HepG2 (cell line): ENCODE measurements at regions of chr10 and their contacts with region 1.

Region 1: DNA sequence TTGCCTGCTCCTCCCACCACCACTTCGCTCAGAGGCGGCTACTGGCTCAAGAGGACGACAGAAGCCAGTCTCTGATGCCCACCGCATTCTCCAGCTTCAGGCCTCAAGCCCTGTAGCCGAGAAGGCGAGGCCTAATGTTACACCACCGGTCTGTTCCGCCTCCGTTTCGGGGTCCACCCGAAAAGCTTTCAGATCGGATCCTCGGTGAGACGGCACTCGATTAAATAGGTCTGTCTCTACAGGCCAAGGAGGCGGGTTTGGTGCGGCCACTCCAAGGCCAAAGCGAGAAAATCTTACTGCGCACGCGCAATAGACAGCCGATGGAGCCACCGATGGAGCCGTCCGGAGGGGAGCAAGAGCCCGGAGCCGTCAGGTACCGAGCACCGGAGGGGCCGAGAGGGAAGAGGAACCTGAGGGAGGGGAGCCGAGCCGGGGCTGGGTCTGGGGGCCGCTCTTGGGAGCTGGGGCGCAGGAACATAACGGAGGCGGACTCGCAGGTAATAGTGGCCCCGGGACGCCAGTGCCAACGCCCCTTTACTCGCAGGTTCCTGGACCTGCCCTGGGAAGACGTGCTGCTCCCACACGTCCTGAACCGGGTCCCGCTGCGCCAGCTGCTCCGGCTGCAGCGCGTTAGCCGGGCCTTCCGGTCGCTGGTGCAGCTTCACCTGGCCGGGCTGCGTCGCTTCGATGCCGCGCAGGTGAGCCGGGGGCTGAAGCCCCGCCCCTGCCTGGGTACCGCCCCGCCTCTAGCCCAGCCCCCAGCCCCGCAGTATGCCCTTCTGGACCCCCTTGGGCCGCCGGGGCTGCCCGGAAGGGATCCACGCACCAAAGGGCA is at the start of gene FBXL15:
- DNase-seq: peak; percentile 95
- ATAC-seq: peak; percentile 58
- H3K4me3 ChIP-seq: peak within 1 kb of the TSS; percentile 79 to 97 (median 84)
- H3K27ac ChIP-seq: peak within 1 kb of the TSS; percentile 87
- H3K4me1 ChIP-seq: peaks cover 35% of the 10 kb centered on the region
- H3K27me3 ChIP-seq: peaks cover 1 to 5% of the 10 kb centered on the region in 2 experiments; a peak in 2 of 5 replicates
- CTCF ChIP-seq: no peak
- EP300 ChIP-seq: 0 out of 4 replicates have a peak, but pooled peaks have one; percentile 24 to 30
- POLR2A ChIP-seq: peak in 1 of 2 experiments; percentile 52; a peak in 1 of 4 replicates
- RAD21 ChIP-seq: no peak
- total RNA-seq, gene FBXL15: 8.3 and 8.6 TPM in 2 replicates

Region 2: DNA sequence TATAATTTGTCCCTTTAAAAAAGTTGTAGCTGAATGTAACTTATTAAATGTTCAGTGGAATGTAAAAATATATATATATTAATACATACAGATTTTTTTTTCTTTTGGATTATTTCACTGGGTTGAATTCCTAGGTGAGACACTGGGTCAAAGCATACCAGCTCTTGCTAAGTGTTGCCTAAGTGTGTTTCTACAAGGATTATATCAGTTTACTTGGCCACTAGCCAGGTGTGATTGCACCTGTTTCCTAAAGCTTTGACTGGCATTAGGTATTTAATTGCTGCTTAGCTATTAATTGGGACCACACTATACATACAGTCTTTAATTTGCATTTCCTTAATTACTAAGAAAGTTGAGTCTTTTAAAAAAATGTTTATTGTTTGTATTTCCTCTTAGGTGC is 200.4 kb before region 1 on chr10:
- CTCF ChIA-PET with region 1: no interaction called
- POLR2A ChIA-PET with region 1: no interaction called
- in situ Hi-C with region 1: no loop called
- intact Hi-C with region 1: no loop called
- DNase-seq: no peak
- ATAC-seq: no peak
- H3K4me3 ChIP-seq: no peak overlapping the region
- H3K27ac ChIP-seq: no peak overlapping the region
- H3K4me1 ChIP-seq: peaks cover 4% of the 10 kb centered on the region
- H3K27me3 ChIP-seq: 0 out of 5 replicates have a peak, but pooled peaks cover 0 to 2% of the 10 kb centered on the region in 2 experiments
- CTCF ChIP-seq: no peak
- EP300 ChIP-seq: no peak
- POLR2A ChIP-seq: no peak
- RAD21 ChIP-seq: no peak

Region 3: DNA sequence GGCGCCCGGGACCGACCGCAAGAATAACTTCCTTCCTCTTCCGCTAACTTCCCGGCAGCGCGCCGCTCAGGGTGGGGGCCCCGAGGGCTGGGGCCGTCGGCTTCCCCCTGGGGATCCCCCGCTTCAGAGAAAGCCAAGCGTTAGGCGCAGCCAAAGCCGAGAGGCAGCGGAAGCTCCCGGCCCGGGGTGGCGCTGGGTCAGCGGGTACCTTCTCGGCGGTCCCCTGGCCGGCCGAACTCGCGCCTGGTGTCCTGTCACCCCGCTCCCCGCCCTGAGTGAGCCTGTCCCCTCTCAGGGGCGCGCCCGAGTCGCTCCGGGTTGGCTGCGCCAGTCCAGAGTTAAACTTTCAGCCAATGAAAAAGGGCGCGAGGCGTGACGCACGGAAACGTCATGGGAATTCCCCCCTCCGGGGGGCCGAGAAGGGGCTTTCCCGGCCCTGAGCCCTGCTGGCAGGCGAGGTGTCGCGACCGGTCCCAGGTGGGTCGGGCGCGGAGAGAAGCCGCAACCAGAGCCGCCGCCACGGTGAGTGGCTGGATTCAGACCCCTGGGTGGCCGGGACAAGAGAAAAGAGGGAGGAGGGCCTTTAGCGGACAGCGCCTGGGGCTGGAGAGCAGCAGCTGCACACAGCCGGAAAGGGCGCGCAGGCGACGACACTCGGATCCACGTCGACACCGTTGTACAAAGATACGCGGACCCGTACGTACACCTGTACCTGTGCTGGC is 26.8 kb before region 1 on chr10:
- CTCF ChIA-PET with region 1: interaction called, 5 read pairs
- POLR2A ChIA-PET with region 1: interaction called, 12 read pairs
- in situ Hi-C with region 1: no loop called
- intact Hi-C with region 1: loop called (anchors 2 kb)
- DNase-seq: peak; percentile 85
- ATAC-seq: peak; percentile 90
- H3K4me3 ChIP-seq: peak overlapping the region; percentile 69 to 82 (median 79)
- H3K27ac ChIP-seq: peak overlapping the region; percentile 66
- H3K4me1 ChIP-seq: peaks cover 44% of the 10 kb centered on the region
- H3K27me3 ChIP-seq: peaks cover 0 to 11% of the 10 kb centered on the region in 2 experiments; a peak in 2 of 5 replicates
- CTCF ChIP-seq: peak; percentile 91
- EP300 ChIP-seq: no peak
- POLR2A ChIP-seq: peak in 1 of 2 experiments; percentile 51; a peak in 2 of 4 replicates
- RAD21 ChIP-seq: peak; percentile 93

Region 4: DNA sequence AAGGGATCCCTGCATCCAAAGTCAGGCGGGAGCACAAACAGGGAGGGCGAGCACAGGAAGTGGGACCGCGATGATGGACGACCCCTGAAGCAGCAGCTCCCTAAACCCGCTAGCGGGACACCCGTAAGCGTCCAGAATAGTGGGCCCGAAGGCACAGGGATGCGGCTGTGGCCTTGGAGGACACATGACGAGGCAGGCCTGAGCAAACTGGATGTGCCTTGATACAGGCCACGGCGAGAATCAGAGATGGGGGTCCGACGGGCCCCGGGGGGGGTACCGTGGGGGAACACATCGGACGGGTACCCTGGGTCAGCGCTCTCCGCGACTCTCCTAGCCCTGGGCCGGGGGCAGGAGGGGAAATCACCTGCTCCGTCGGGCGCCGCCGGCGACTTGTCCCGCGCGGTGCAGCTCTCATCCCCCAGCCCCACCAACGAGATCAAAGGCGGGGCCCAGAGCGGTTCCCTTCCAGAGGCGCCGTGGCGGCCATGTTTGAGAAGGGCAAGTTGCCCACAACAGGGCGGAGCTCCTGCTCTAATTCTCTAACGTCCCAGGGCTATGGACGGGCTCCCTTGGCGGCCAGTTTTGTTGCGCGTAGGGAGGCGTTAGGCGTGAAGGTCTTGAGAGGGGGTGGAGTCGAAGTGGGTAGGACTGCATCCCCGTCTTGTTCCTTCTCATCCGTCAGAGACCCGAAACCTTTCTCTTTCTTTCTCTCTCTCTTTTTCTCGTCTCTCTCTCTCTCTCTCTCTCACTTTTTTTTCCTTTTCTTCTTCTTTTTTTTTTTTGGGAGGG is 11.3 kb after region 1 on chr10 and contains the start of gene CUEDC2:
- CTCF ChIA-PET with region 1: no interaction called
- POLR2A ChIA-PET with region 1: interaction called, 135 read pairs
- in situ Hi-C with region 1: no loop called
- intact Hi-C with region 1: loop called (anchors 1 kb)
- DNase-seq: peak; percentile 89
- ATAC-seq: peak; percentile 78
- H3K4me3 ChIP-seq: peak within 1 kb of the TSS; percentile 74 to 92 (median 91)
- H3K27ac ChIP-seq: peak within 1 kb of the TSS; percentile 72
- H3K4me1 ChIP-seq: peaks cover 35% of the 10 kb centered on the region
- H3K27me3 ChIP-seq: no peaks in the 10 kb centered on the region; a peak in 1 of 5 replicates
- CTCF ChIP-seq: 0 out of 2 replicates have a peak, but pooled peaks have one; percentile 46
- EP300 ChIP-seq: 0 out of 4 replicates have a peak, but pooled peaks of 1 of the 2 experiments have one; percentile 17
- POLR2A ChIP-seq: peak; percentile 67 to 81
- RAD21 ChIP-seq: 0 out of 2 replicates have a peak, but pooled peaks have one; percentile 40
- total RNA-seq, gene CUEDC2: 13.0 and 13.1 TPM in 2 replicates

Region 5: GRCh38 chr10:102450194-102450938 is 29.3 kb after region 1 on chr10:
- CTCF ChIA-PET with region 1: no interaction called
- POLR2A ChIA-PET with region 1: interaction called, 27 read pairs
- in situ Hi-C with region 1: no loop called
- intact Hi-C with region 1: no loop called
- DNase-seq: peak; percentile 75
- ATAC-seq: peak; percentile 89
- H3K4me3 ChIP-seq: peak overlapping the region; percentile 64 to 96 (median 72)
- H3K27ac ChIP-seq: peak overlapping the region; percentile 82
- H3K4me1 ChIP-seq: peaks cover 28% of the 10 kb centered on the region
- H3K27me3 ChIP-seq: no peaks in the 10 kb centered on the region; a peak in 1 of 5 replicates
- CTCF ChIP-seq: no peak; the same call in 1 of the 2 replicates
- EP300 ChIP-seq: no peak
- POLR2A ChIP-seq: peak; percentile 52 to 64; a peak in 3 of 4 replicates
- RAD21 ChIP-seq: peak; percentile 76

Region 6: DNA sequence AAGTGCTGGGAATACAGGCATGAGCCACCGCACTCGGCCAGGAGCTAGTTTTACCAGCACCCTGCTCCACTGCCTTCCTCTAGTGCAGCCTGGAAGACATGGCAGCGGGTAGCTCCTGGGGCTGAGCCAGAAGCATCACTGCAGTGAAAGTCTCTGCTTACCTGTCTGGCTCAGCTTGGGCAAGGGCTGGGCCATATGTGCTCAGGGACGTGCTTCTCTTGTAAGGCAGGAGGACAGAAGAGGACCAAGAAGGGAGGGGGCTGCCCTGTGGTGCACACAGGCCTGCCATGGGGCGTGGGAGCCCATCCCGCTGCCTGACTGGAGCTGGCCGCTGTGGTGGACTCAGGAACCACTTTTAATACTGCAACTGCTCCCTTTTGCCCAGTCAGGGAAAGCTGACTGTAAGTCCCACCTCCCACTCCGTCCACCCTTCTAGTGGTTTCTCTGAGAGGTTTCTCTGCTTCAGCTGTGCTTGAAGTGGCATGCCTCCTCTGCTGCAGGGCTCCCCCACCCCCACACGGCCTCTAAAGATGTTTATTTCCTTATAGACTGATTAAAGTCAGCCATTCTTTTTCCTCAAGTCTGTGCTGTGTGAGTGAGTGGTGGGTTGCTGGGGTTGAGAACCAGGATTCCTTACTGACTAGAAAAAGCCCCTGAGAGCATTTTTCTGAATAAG is 55.6 kb after region 1 on chr10:
- CTCF ChIA-PET with region 1: interaction called, 8 read pairs
- POLR2A ChIA-PET with region 1: no interaction called
- in situ Hi-C with region 1: no loop called
- intact Hi-C with region 1: loop called (anchors 5 kb)
- DNase-seq: no peak
- ATAC-seq: no peak
- H3K4me3 ChIP-seq: no peak overlapping the region
- H3K27ac ChIP-seq: no peak overlapping the region
- H3K4me1 ChIP-seq: no peaks in the 10 kb centered on the region
- H3K27me3 ChIP-seq: no peaks in the 10 kb centered on the region
- CTCF ChIP-seq: no peak
- EP300 ChIP-seq: no peak
- POLR2A ChIP-seq: no peak
- RAD21 ChIP-seq: no peak